CD4-positive, alpha-beta memory T cell (primary cell): ENCODE measurements at regions of chr18 and their contacts with region 1.

Region 1: DNA sequence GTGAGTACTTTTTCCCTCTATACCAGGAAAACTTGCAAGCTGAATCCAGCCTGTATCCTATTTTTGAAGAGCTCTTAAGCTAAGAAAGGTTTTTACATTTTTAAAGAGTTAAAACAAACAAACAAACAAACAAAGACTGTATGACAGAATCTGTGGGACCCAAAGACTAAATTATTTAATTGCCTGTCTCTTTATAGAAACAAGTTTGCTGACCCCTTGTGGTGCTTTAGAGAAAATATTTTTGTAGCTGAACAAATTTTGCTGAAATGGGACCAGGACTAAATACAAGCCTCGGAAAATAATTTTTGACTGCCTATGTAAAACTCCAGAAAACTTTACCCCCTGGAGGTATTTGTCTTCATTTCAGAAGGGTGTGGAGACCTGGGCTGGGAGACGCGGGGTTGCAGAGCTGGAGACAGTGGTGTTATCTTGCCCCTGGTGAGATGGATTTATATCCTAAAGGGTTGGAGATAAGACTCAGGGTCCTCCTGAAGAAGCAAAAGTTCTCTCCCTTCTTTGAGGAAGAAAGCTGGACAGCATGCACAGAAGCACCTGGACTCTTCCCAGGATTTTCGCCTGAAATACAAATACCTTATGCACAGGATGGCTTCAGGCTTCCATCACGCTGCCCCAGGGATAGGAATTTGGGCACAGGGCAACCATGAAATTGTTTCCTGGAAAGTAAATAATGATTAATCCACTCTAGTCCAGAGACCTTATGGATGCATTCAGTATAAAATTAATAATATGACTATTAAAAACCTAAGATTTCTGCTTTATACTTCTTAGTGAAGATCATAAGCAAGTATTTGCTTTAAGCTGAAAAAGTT is 54.3 kb downstream of the TMX3 start:
- DNase-seq: peak in 4 of 5 donors; percentile 18 to 31 (median 27)
- H3K4me3 ChIP-seq: no peak overlapping the region
- H3K4me3 Mint-ChIP-seq: no peak overlapping the region
- H3K27ac ChIP-seq: no peak overlapping the region
- H3K27ac Mint-ChIP-seq: no peak overlapping the region
- H3K4me1 ChIP-seq: no peaks in the 10 kb centered on the region
- H3K4me1 Mint-ChIP-seq: no peaks in the 10 kb centered on the region
- H3K27me3 ChIP-seq: no peaks in the 10 kb centered on the region
- H3K27me3 Mint-ChIP-seq: peaks cover 0 to 1% of the 10 kb centered on the region in 2 donors

Region 2: DNA sequence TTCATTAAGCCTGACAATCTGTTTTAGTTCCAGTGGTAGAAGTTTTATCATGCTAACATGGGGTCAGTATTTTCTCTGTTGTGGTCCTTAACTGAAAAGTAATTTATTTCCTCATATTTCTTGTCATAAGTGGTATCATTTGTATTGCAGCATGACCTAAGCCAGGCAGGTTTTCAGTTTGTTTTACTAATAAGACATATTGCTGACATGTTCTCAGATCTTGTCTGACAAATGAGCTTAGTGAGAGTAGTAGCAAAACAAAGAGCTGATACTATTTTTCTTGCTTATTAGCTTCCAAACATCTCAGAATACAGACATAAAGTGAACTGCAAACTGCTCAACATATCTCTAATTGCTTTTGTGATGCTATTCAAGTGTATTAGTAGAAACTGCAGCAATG is 1437.7 kb before region 1 on chr18:
- CTCF ChIA-PET with region 1: interaction called, 29 read pairs
- POLR2A ChIA-PET with region 1: no interaction called
- intact Hi-C with region 1: no loop called
- DNase-seq: no peak
- H3K4me3 ChIP-seq: no peak overlapping the region
- H3K4me3 Mint-ChIP-seq: no peak overlapping the region
- H3K27ac ChIP-seq: no peak overlapping the region
- H3K27ac Mint-ChIP-seq: no peak overlapping the region
- H3K4me1 ChIP-seq: no peaks in the 10 kb centered on the region
- H3K4me1 Mint-ChIP-seq: no peaks in the 10 kb centered on the region
- H3K27me3 ChIP-seq: no peaks in the 10 kb centered on the region
- H3K27me3 Mint-ChIP-seq: peaks cover 0 to 2% of the 10 kb centered on the region in 2 donors

Region 3: DNA sequence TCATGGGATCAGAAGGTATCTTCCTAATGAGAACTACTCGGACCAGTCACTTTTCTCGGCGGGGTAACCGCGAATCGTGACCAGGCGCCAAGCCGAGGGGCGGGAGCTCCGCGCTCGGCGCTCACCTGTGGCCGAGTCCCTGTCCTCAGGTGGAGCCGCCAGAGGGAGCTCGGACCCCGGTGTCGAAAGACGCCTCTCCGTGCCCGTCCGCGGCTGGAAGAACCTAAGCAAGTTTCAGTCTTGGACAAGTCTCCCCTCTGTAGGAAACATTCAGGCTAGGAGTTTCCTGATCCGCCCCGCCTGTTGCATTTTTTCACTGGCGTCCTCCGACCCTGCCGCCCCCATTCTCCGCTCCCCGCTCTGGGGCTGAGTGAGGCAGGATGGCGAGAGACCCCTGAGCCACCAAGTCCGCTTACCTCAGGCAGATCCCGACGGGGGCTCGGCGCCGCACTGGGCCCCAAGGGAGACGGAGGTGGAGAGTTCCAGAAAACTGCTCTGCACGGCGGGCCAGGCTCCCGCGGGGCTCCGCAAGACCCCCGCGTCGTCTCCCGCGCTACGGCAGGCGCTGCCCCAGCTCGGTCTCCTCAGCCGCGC is 1144.5 kb before region 1 on chr18:
- CTCF ChIA-PET with region 1: interaction called, 3 read pairs
- POLR2A ChIA-PET with region 1: no interaction called
- intact Hi-C with region 1: loop called (anchors 1 kb)
- DNase-seq: peak; percentile 36 to 62 (median 44)
- H3K4me3 ChIP-seq: peak overlapping the region; percentile 58 to 59
- H3K4me3 Mint-ChIP-seq: peak overlapping the region; percentile 87 to 94 (median 92)
- H3K27ac ChIP-seq: peak overlapping the region; percentile 36
- H3K27ac Mint-ChIP-seq: peak overlapping the region in 6 of 7 donors; percentile 1 to 90 (median 86)
- H3K4me1 ChIP-seq: peaks cover 16% of the 10 kb centered on the region
- H3K4me1 Mint-ChIP-seq: peaks cover 14 to 30% (median 22%) of the 10 kb centered on the region in 4 donors
- H3K27me3 ChIP-seq: no peaks in the 10 kb centered on the region
- H3K27me3 Mint-ChIP-seq: no peaks in the 10 kb centered on the region

Region 4: GRCh38 chr18:68648191-68648590 is 12.4 kb before region 1 on chr18:
- CTCF ChIA-PET with region 1: interaction called, 19 read pairs
- POLR2A ChIA-PET with region 1: interaction called, 3 read pairs
- intact Hi-C with region 1: no loop called
- DNase-seq: no peak
- H3K4me3 ChIP-seq: no peak overlapping the region
- H3K4me3 Mint-ChIP-seq: no peak overlapping the region
- H3K27ac ChIP-seq: no peak overlapping the region
- H3K27ac Mint-ChIP-seq: no peak overlapping the region
- H3K4me1 ChIP-seq: no peaks in the 10 kb centered on the region
- H3K4me1 Mint-ChIP-seq: no peaks in the 10 kb centered on the region
- H3K27me3 ChIP-seq: no peaks in the 10 kb centered on the region
- H3K27me3 Mint-ChIP-seq: peaks cover 15 to 25% of the 10 kb centered on the region in 2 donors

Region 5: GRCh38 chr18:68676913-68677312 is 16.3 kb after region 1 on chr18:
- CTCF ChIA-PET with region 1: interaction called, 10 read pairs
- POLR2A ChIA-PET with region 1: no interaction called
- intact Hi-C with region 1: no loop called
- DNase-seq: no peak
- H3K4me3 ChIP-seq: no peak overlapping the region
- H3K4me3 Mint-ChIP-seq: no peak overlapping the region
- H3K27ac ChIP-seq: no peak overlapping the region
- H3K27ac Mint-ChIP-seq: peak overlapping the region in 4 of 7 donors; percentile 1 to 85 (median 6)
- H3K4me1 ChIP-seq: no peaks in the 10 kb centered on the region
- H3K4me1 Mint-ChIP-seq: peaks cover 0 to 5% (median 2%) of the 10 kb centered on the region in 4 donors
- H3K27me3 ChIP-seq: no peaks in the 10 kb centered on the region
- H3K27me3 Mint-ChIP-seq: no peaks in the 10 kb centered on the region